ENCODE measurements at regions of chr17 and their contacts with region 1.

Region 1: GRCh38 chr17:56592487-56593085 is 913 bp upstream of the NOG start:
- DNase-seq: peak; percentile 39
- ATAC-seq: peak; percentile 53
- H3K4me3 ChIP-seq: peak overlapping the region; percentile 57
- H3K27ac ChIP-seq: no peak overlapping the region
- H3K4me1 ChIP-seq: peaks cover 6% of the 10 kb centered on the region
- H3K27me3 ChIP-seq: peaks cover 31% of the 10 kb centered on the region
- CTCF ChIP-seq: peak; percentile 95
- POLR2A ChIP-seq: 0 out of 2 replicates have a peak, but pooled peaks have one; percentile 45
- RAD21 ChIP-seq: peak; percentile 92

Region 2: DNA sequence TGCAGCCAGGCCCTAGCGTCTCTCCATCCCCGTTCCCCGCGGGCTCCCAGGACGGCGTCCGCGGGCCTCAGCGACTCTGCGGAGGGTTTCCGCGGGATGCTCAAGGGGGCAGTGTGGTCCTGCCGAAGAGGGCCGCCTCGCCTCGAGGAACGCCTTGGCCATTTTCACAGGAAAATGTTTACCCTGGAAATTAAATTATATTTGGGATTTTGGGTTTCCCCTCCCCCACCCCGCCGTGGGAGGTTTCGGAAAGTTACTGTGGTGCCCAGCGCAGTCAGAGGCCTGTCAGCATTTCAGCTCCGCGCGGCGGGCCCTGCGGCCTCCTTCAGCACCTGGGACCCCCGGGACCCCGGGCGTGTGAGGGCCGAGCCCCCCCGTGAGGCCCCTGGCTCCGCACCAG is 747.2 kb before region 1 on chr17:
- CTCF ChIA-PET with region 1: no interaction called
- POLR2A ChIA-PET with region 1: no interaction called
- dilution Hi-C with region 1: no loop called
- in situ Hi-C with region 1: no loop called
- intact Hi-C with region 1: loop called (anchors 10 kb)
- DNase-seq: peak; percentile 20
- ATAC-seq: peak; percentile 96
- H3K4me3 ChIP-seq: no peak overlapping the region
- H3K27ac ChIP-seq: no peak overlapping the region
- H3K4me1 ChIP-seq: no peaks in the 10 kb centered on the region
- H3K27me3 ChIP-seq: 0 out of 2 replicates have a peak, but pooled peaks cover 2% of the 10 kb centered on the region
- CTCF ChIP-seq: peak; percentile 60
- POLR2A ChIP-seq: no peak
- RAD21 ChIP-seq: peak; percentile 70

Region 3: DNA sequence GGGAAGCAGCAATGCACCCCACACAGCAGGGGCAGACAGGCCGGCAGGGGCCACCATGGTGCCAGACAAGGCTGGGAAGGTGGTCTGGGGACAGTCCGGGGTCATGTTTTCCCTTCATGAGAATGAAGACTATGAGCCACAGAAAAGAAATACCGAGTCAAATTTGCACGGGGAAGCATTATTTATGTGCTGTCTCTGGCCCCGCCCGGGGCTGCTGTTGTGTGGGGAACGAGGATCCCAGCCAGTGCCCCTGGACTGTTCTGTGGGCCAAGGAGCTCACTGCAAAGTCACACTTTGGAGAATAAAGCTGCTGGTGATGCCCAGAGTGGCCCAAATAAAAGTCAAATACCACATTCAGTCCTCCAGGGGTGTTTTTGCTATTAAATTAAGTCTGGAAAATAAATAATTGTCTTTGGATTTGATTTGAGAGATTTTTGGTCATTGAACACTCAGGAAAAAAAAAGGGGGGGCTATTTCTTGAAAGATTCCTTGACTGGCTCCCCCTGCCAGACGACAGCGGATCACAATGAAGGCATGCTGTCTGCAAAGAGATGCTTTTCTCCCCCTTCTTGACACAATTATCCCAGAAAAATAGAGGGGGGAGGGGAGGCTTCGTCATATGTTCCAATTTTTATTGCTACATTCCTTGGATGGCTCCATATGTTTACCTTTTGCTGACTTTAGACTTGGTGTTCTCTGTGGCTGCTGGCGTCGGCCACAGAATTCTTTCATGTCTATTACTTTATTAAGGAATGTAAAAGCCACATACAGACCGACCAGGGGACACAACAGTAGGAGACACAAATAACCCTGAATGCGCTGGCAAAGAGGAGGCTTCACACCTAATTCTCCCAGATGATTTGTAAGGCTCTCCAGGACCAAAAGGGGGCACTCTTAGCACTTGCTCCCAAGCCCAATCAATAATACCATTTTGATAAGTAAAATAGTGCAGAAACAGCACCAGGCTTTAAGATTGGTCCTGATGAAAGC is 466.5 kb before region 1 on chr17:
- CTCF ChIA-PET with region 1: no interaction called
- POLR2A ChIA-PET with region 1: no interaction called
- dilution Hi-C with region 1: no loop called
- in situ Hi-C with region 1: no loop called
- intact Hi-C with region 1: loop called (anchors 1 kb)
- DNase-seq: peak; percentile 74
- ATAC-seq: peak; percentile 75
- H3K4me3 ChIP-seq: no peak overlapping the region
- H3K27ac ChIP-seq: no peak overlapping the region
- H3K4me1 ChIP-seq: peaks cover 1% of the 10 kb centered on the region; the same call in 1 of the 2 replicates
- H3K27me3 ChIP-seq: no peaks in the 10 kb centered on the region
- CTCF ChIP-seq: peak; percentile 79
- POLR2A ChIP-seq: no peak
- RAD21 ChIP-seq: peak; percentile 88

Region 4: GRCh38 chr17:56690486-56691291 is 98.1 kb after region 1 on chr17:
- CTCF ChIA-PET with region 1: interaction called, 3 read pairs
- POLR2A ChIA-PET with region 1: interaction called, 15 read pairs
- dilution Hi-C with region 1: no loop called
- in situ Hi-C with region 1: no loop called
- intact Hi-C with region 1: no loop called
- DNase-seq: no peak
- ATAC-seq: no peak
- H3K4me3 ChIP-seq: no peak overlapping the region
- H3K27ac ChIP-seq: no peak overlapping the region
- H3K4me1 ChIP-seq: peaks cover 2% of the 10 kb centered on the region; the same call in 1 of the 2 replicates
- H3K27me3 ChIP-seq: no peaks in the 10 kb centered on the region
- CTCF ChIP-seq: no peak
- POLR2A ChIP-seq: no peak
- RAD21 ChIP-seq: no peak

Region 5: DNA sequence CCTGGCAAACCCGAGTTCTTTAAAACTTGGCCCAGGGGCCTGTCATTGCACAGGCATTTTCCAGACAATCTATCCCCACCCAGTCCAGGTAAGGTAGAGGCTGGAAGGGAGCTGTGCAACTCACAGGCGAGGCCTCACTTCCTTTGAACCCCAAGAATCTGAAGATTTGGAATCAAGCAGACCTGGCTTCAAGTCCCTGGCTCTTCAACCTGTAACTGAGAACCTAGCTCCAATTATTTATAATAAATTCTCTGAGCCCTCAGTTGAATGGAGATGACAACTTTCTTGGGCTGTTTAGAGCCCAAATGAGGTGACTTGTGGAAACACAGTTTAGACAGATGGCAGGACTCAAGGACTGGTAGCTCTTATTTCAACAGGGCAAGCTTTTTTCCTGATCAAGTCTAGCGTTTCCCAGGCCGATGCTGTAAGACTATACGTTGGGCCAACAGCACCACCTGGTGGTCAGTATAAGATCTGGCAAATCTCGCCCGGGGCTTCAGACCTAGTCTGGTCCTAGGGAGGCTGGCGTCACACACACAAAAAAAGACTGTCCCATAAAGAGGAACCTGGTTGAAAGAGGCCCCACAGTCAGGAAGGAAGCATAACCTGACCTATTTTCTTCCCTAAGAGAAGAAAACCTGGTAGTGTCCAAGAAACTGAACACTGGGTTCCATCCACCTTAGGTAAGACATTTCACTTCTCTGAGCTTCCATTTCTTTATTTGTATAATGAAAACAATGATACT is 123.2 kb after region 1 on chr17:
- CTCF ChIA-PET with region 1: interaction called, 27 read pairs
- POLR2A ChIA-PET with region 1: no interaction called
- dilution Hi-C with region 1: no loop called
- in situ Hi-C with region 1: loop called (anchors 5 kb)
- intact Hi-C with region 1: loop called (anchors 1 kb)
- DNase-seq: peak; percentile 82
- ATAC-seq: peak; percentile 98
- H3K4me3 ChIP-seq: no peak overlapping the region
- H3K27ac ChIP-seq: no peak overlapping the region
- H3K4me1 ChIP-seq: peaks cover 6% of the 10 kb centered on the region
- H3K27me3 ChIP-seq: no peaks in the 10 kb centered on the region; the same call in 1 of the 2 replicates
- CTCF ChIP-seq: peak; percentile 90
- POLR2A ChIP-seq: no peak; the same call in 1 of the 2 replicates
- RAD21 ChIP-seq: peak; percentile 97

Region 6: DNA sequence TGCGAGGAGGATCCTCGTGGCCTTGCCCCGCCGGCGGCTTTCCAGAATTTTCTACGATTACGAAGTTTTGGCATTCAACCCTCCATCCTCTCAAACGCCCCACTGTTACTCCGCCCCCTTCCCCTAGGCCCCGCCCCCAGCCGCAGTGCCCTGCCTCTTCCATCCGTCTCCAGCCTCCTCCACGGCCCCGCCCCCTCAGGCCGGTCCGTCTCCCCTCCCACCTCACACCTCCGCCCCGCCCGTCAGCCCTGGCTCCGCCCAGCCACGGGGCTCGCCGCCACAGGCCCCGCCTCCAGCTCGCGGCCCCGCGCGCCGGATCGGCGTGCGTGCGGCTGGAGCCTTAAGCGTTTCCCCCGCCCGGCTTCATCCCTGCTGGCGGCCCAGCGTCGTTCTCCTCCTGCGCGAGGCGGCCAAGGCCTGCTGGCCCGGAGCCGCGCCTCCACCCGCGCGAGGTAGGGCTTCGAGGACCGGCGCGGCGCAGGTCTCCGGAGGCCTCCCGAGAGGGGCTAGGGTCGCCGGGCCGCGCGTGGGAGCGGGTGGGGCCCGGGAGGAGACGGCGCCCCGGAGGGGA is 241.3 kb after region 1 on chr17 and contains the starts of genes C17orf67 and DGKE:
- CTCF ChIA-PET with region 1: no interaction called
- POLR2A ChIA-PET with region 1: no interaction called
- dilution Hi-C with region 1: no loop called
- in situ Hi-C with region 1: no loop called
- intact Hi-C with region 1: loop called (anchors 5 kb)
- DNase-seq: peak; percentile 94
- ATAC-seq: peak; percentile 95
- H3K4me3 ChIP-seq: peak within 1 kb of the TSS; percentile 85
- H3K27ac ChIP-seq: peak within 1 kb of the TSS; percentile 57
- H3K4me1 ChIP-seq: peaks cover 8% of the 10 kb centered on the region
- H3K27me3 ChIP-seq: no peaks in the 10 kb centered on the region
- CTCF ChIP-seq: no peak
- POLR2A ChIP-seq: no peak
- RAD21 ChIP-seq: no peak
- total RNA-seq, gene C17orf67: 0.18 and 0.56 TPM in 2 replicates
- total RNA-seq, gene DGKE: 4.7 and 5.0 TPM in 2 replicates

Region 7: GRCh38 chr17:56845934-56846333 is 253.3 kb after region 1 on chr17:
- CTCF ChIA-PET with region 1: no interaction called
- POLR2A ChIA-PET with region 1: no interaction called
- dilution Hi-C with region 1: no loop called
- in situ Hi-C with region 1: no loop called
- intact Hi-C with region 1: no loop called
- DNase-seq: no peak
- ATAC-seq: no peak
- H3K4me3 ChIP-seq: no peak overlapping the region
- H3K27ac ChIP-seq: no peak overlapping the region
- H3K4me1 ChIP-seq: no peaks in the 10 kb centered on the region
- H3K27me3 ChIP-seq: no peaks in the 10 kb centered on the region
- CTCF ChIP-seq: no peak
- POLR2A ChIP-seq: no peak
- RAD21 ChIP-seq: no peak

Region 8: GRCh38 chr17:56960596-56961538 is 368.3 kb after region 1 on chr17 and contains the start of gene COIL:
- CTCF ChIA-PET with region 1: no interaction called
- POLR2A ChIA-PET with region 1: no interaction called
- dilution Hi-C with region 1: no loop called
- in situ Hi-C with region 1: no loop called
- intact Hi-C with region 1: loop called (anchors 5 kb)
- DNase-seq: peak; percentile 89
- ATAC-seq: peak; percentile 100
- H3K4me3 ChIP-seq: peak within 1 kb of the TSS; percentile 78
- H3K27ac ChIP-seq: peak within 1 kb of the TSS; percentile 89
- H3K4me1 ChIP-seq: peaks cover 4% of the 10 kb centered on the region; the same call in 1 of the 2 replicates
- H3K27me3 ChIP-seq: no peaks in the 10 kb centered on the region
- CTCF ChIP-seq: peak; percentile 99
- POLR2A ChIP-seq: peak; percentile 77
- RAD21 ChIP-seq: peak; percentile 65
- total RNA-seq, gene COIL: 13.3 and 21.7 TPM in 2 replicates